A549 (cell line): ENCODE measurements at regions of chr2 and their contacts with region 1.

Region 1: DNA sequence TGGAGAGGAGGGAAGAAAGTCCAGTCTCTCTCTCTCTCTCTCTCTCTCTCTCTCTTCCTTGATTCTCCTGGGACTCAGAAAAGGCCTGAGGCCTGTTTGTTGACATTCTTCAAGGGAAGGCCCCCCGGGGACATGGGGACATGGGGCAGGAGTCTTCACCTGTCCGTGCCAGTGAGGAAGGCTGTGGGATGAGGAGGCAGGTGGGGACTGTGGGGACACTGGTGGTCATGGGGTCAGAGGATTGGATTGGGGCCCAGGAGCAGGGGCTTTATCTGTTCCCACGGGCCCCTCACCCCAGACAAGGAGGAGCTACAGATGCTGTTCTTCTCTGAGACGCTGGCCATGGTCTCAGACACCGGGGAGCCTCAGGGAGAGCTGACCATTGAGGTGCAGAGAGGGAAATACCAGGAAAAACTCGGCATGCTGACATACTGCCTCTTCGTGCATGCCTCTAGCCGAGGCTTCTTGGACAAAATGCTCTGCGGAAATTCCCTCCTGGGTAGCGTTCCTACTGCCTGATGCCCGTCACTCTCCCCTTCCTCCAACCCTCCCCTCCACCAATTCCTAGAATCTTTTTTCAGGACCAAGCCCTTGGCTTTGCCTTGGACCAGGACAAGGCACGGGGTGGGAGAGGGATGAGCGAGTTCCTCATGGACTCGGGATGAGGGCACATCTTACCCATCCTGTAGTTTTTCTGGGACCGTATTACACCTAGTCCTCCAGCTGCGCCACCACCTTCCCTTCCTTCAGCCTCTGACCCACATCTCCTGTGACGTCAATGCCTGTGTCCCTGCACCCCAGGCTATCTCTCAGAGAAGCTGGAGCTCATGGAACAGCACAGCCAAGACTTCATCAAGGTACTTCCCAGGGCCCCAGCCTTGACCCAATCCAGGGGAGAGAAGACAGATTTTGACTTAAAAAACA is 841 bp downstream of the CATIP start:
- DNase-seq: peak in 1 of 2 experiments; percentile 40
- ATAC-seq: peak; percentile 27 to 49; a peak in 5 of 6 replicates
- H3K4me3 ChIP-seq: no peak overlapping the region
- H3K27ac ChIP-seq: peak overlapping the region; percentile 59 to 76; a peak in 5 of 6 replicates
- H3K4me1 ChIP-seq: peaks cover 10% of the 10 kb centered on the region
- CTCF ChIP-seq: no peak
- EP300 ChIP-seq: no peak
- POLR2A ChIP-seq: no peak
- RAD21 ChIP-seq: no peak

Region 2: DNA sequence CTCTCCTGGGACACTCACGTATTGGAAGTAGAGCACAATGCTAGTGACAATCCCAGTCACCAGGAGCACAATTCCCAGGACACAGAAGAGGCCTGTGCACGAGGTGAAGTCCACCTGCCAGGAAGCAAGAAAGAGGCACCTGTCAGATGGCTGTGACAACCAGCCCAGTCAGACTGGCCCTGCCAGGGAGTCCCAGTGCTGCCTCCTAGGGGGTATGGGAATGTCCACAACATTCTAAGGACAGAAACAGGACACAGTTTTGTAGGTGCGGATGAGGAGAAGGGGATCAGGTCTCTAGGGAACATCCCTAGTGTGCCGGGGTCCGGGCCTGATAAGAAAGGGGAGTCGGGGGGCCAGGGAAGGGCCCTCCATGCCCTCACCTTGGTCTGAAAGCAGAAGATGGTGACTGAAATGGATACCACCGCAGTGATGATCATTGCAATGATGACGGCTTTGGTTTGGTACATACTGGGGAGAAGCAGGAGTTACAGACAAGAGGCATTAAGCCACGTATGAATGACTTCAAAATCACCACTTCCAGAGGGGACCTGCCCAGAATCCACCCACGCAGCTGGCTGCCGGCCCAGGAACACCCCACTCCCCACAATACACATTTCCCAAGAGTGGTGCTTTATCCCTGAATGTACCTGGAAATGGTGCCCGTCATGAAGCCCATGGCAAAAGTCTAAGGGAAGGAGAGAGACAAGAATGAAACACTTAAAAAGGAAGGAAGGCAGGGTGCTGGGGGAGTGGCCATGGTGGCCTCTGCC is 80.3 kb before region 1 on chr2:
- CTCF ChIA-PET with region 1: interaction called, 32 read pairs
- POLR2A ChIA-PET with region 1: no interaction called
- DNase-seq: no peak
- ATAC-seq: peak in 1 of 2 experiments; percentile 23; a peak in 1 of 6 replicates
- H3K4me3 ChIP-seq: no peak overlapping the region
- H3K27ac ChIP-seq: no peak overlapping the region
- H3K4me1 ChIP-seq: peaks cover 10% of the 10 kb centered on the region
- CTCF ChIP-seq: peak; percentile 12; the same call in 1 of the 3 replicates
- EP300 ChIP-seq: no peak
- POLR2A ChIP-seq: no peak
- RAD21 ChIP-seq: no peak

Region 3: DNA sequence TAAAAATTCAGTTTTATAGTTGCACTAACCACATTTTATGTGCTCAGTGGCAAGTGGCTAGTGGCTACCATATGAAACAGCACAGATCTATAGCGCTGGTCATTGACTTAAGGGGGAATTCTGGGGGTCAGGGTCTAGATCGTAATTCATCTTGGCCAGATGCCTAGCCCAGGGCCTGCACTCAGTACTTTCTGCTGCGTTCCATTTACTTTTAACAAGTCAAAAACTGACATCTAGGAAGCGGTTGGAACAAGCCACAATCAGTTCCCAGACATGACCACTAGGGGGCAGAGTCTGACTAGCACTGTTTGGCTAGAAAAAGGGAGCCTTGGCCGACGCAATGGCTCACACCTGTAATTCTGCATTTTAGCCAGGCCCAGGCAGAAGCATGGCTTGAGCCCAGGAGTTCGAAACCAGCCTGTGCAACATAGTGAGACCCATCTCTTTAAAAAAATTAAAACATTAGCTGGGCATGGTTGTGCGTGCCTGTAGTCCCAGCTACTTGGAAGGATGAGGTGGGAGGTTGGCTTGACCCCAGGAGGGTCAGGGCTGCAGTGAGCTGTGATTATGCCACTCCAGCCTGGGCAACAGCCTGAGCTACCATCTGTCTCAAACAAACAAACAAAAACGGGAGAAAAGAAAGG is 56.2 kb before region 1 on chr2:
- CTCF ChIA-PET with region 1: interaction called, 49 read pairs
- POLR2A ChIA-PET with region 1: no interaction called
- DNase-seq: peak; percentile 48 to 90
- ATAC-seq: peak; percentile 88 to 93
- H3K4me3 ChIP-seq: no peak overlapping the region
- H3K27ac ChIP-seq: peak overlapping the region in 1 of 2 experiments; percentile 37; a peak in 1 of 6 replicates
- H3K4me1 ChIP-seq: no peaks in the 10 kb centered on the region
- CTCF ChIP-seq: peak; percentile 93
- EP300 ChIP-seq: no peak
- POLR2A ChIP-seq: no peak
- RAD21 ChIP-seq: peak; percentile 95 to 96

Region 4: DNA sequence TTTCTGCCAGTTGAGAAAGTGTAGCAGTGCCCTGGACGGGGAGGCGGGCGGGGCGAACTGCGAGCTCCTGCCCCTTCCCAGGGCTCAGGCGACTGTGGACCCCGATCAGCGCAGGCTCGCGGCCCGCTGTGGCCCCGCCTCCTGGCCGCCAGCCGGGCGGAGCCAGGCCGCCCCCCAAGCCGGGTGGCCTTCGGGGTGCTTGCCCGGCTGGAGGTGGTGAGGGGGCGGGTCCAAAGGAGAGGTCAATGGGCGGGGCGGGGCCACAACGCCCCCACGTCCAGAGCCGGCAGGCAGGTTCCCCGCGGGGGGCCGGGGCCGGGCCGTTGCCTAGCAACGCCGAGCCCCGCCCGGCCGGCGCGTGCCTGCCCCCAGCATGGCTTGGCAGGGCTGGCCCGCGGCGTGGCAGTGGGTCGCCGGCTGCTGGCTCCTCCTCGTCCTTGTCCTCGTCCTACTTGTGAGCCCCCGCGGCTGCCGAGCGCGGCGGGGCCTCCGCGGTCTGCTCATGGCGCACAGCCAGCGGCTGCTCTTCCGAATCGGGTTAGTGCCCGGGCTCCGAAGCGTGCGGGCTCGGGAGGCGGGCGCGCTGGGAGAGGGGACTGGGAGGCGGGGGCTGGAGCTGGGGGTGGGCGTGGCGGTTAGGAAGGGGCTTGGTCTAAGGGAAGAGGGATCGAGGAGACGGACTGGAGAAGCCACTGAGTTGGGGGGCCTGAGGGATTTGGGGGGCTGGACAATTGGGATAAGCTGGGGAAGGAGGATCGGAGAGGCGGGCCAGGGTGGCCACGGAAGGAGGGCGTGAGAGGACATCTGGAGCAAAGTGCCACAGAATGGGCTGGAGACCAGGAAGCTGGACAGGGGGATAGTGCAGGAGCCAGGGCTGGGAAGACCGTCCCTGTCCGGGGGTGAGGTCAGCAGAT is 34.3 kb before region 1 on chr2:
- CTCF ChIA-PET with region 1: interaction called, 28 read pairs
- POLR2A ChIA-PET with region 1: interaction called, 3 read pairs
- DNase-seq: peak; percentile 84 to 91
- ATAC-seq: peak; percentile 80 to 85
- H3K4me3 ChIP-seq: peak overlapping the region; percentile 82
- H3K27ac ChIP-seq: peak overlapping the region; percentile 93 to 98
- H3K4me1 ChIP-seq: peaks cover 32% of the 10 kb centered on the region
- CTCF ChIP-seq: no peak
- EP300 ChIP-seq: no peak
- POLR2A ChIP-seq: peak; percentile 55
- RAD21 ChIP-seq: no peak

Region 5: DNA sequence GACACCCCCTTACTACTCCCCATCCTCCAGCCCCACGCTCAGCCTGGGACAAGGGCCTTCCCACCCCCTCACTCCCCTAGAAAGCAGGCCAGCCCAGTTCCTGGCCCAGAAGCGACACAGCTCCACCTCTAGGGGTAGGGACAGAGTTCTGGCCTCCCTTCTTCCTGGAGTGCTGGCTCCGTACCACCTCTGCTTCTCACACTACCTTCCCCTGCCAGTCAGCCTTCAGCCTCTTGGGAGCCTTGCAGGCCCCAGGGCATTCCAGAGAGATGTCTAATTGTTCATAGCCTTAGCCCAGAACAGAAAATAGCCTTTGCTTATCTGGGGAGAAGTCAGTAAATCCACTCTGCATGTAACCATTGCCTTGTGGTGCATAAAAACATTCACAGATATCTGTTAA is 13.9 kb before region 1 on chr2:
- CTCF ChIA-PET with region 1: interaction called, 14 read pairs
- POLR2A ChIA-PET with region 1: no interaction called
- DNase-seq: no peak
- ATAC-seq: peak; percentile 27 to 44; a peak in 3 of 6 replicates
- H3K4me3 ChIP-seq: no peak overlapping the region
- H3K27ac ChIP-seq: no peak overlapping the region; a peak in 1 of 6 replicates
- H3K4me1 ChIP-seq: no peaks in the 10 kb centered on the region
- CTCF ChIP-seq: no peak
- EP300 ChIP-seq: no peak
- POLR2A ChIP-seq: no peak
- RAD21 ChIP-seq: no peak

Region 6: GRCh38 chr2:218387374-218388194 is 30.1 kb after region 1 on chr2:
- CTCF ChIA-PET with region 1: interaction called, 10 read pairs
- POLR2A ChIA-PET with region 1: no interaction called
- DNase-seq: peak; percentile 74 to 82
- ATAC-seq: peak; percentile 95 to 96
- H3K4me3 ChIP-seq: peak overlapping the region; percentile 48
- H3K27ac ChIP-seq: peak overlapping the region; percentile 80 to 89
- H3K4me1 ChIP-seq: peaks cover 17% of the 10 kb centered on the region
- CTCF ChIP-seq: no peak
- EP300 ChIP-seq: peak; percentile 24 to 71; a peak in 3 of 5 replicates
- POLR2A ChIP-seq: peak; percentile 51
- RAD21 ChIP-seq: no peak